ENCODE measurements at regions of chr3 and their contacts with region 1.

Region 1: GRCh38 chr3:88219138-88219792 is 69.5 kb downstream of the C3orf38 start:
- DNase-seq: peak; percentile 34
- H3K4me3 Mint-ChIP-seq: no peak overlapping the region
- H3K27ac Mint-ChIP-seq: no peak overlapping the region
- H3K4me1 Mint-ChIP-seq: no peaks in the 10 kb centered on the region
- H3K27me3 Mint-ChIP-seq: peaks cover 2% of the 10 kb centered on the region

Region 2: DNA sequence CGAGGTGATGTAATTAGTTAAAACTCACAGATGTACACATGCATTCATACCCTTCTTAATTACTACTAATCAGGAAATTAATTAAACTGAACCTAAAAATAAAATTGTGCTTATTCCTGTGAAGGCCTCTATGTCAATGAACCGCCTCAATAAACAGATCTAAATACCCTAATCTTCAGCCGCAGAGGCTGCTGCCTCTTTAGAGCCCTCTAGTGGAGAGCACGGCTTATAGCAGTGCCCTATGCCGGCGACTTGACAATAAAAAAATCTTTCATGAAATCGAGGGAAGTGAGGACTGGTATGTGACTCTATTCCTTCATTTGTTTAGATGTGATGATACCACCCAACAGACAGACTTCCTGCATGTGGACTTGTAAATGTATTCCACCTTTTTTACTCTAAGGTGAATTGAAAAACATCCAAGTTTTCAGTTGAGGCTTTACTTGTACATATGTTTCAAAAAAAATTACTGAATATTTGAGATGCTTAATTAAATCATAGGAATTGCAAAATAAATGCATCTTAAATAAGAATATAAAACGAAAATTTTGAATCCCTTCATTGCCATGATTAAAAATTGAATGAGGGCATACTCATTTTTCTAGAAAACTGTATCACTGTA is 879.8 kb after region 1 on chr3:
- CTCF ChIA-PET with region 1: interaction called, 4 read pairs
- POLR2A ChIA-PET with region 1: no interaction called
- intact Hi-C with region 1: loop called (anchors 1 kb)
- DNase-seq: peak; percentile 42
- H3K4me3 Mint-ChIP-seq: no peak overlapping the region
- H3K27ac Mint-ChIP-seq: no peak overlapping the region
- H3K4me1 Mint-ChIP-seq: no peaks in the 10 kb centered on the region
- H3K27me3 Mint-ChIP-seq: no peaks in the 10 kb centered on the region

Region 3: DNA sequence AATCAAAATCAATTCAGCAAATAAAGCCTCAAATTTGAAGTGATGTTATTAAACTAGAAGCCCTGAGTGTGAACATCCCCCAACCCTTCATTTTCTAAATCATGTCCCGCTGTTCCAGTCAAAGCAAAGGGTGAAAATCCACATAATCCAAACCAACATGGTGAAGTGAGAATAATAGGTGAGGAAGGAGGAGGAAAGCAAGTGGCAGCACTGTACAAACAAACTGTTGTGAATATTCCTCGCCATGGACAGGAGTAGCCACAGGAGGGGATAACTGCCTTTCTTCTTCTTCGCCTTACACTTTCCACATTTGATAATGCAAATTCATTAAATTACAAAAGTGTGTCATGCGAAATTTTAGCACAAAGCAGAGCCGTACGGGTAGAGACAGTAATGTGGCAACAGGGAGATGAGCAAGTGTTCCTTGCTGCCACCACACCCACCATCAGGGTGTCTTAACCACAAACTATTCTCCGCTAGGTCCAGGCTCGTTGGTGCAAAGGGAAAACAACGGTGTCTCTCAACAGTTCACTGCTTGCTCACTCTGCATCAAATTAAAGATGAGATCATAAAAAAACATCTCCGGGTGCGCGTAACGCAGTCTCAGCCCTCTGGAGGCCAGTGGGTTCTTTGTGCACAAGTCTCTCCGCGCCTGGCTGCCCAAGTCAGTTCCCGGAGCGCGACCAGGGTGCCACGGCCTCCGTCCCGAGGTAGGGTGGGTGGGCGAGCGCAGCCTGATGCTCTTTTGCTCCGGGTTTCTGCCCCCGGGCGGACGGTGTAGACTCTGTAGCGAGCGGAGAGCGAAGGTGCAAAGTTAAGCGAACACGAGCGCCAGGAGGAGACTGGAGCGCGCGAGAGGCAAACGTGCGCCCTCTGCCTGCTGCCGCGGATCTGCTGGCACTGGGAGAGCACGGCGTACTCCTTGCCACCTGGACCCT is 894.9 kb after region 1 on chr3:
- CTCF ChIA-PET with region 1: no interaction called
- POLR2A ChIA-PET with region 1: no interaction called
- intact Hi-C with region 1: loop called (anchors 5 kb)
- DNase-seq: peak; percentile 49
- H3K4me3 Mint-ChIP-seq: peak overlapping the region; percentile 57
- H3K27ac Mint-ChIP-seq: no peak overlapping the region
- H3K4me1 Mint-ChIP-seq: peaks cover 7% of the 10 kb centered on the region
- H3K27me3 Mint-ChIP-seq: peaks cover 7% of the 10 kb centered on the region